CD14-positive monocyte (primary cell): ENCODE measurements at regions of chr4 and their contacts with region 1.

Region 1: GRCh38 chr4:16026160-16026761 is 57.6 kb downstream of the PROM1 start:
- DNase-seq: peak; percentile 38 to 66 (median 51)
- H3K4me3 ChIP-seq: no peak overlapping the region
- H3K4me3 Mint-ChIP-seq: no peak overlapping the region
- H3K27ac ChIP-seq: no peak overlapping the region
- H3K27ac Mint-ChIP-seq: no peak overlapping the region
- H3K4me1 ChIP-seq: peaks cover 0 to 4% of the 10 kb centered on the region in 2 donors
- H3K4me1 Mint-ChIP-seq: peaks cover 10% of the 10 kb centered on the region
- H3K27me3 ChIP-seq: no peaks in the 10 kb centered on the region
- H3K27me3 Mint-ChIP-seq: no peaks in the 10 kb centered on the region
- CTCF ChIP-seq: peak; percentile 84

Region 2: DNA sequence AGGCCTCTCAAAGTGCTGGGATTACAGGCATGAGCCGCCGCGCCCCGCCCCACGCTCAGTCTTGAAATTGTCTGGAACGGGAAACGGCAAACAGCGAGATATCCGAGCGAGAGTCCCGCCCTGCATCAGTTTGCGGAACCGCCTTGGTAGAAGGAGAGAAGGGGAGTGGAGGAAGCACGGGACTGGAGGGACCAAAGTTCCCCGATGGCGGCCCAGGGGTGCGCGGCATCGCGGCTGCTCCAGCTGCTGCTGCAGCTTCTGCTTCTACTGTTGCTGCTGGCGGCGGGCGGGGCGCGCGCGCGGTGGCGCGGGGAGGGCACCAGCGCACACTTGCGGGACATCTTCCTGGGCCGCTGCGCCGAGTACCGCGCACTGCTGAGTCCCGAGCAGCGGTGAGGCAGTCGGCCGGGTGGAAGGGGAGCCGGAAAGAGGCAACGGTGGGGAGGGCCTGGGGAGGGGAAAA is 323.3 kb before region 1 on chr4 and contains the start of gene BST1:
- intact Hi-C with region 1: no loop called
- DNase-seq: peak; percentile 93 to 96 (median 94)
- H3K4me3 ChIP-seq: peak within 1 kb of the TSS; percentile 60 to 92 (median 63)
- H3K4me3 Mint-ChIP-seq: peak within 1 kb of the TSS; percentile 87 to 97
- H3K27ac ChIP-seq: peak within 1 kb of the TSS; percentile 70 to 87
- H3K27ac Mint-ChIP-seq: peak within 1 kb of the TSS; percentile 91 to 97 (median 94)
- H3K4me1 ChIP-seq: peaks cover 68 to 81% of the 10 kb centered on the region in 2 donors
- H3K4me1 Mint-ChIP-seq: peaks cover 88% of the 10 kb centered on the region
- H3K27me3 ChIP-seq: no peaks in the 10 kb centered on the region
- H3K27me3 Mint-ChIP-seq: peaks cover 0 to 1% (median 1%) of the 10 kb centered on the region in 3 donors
- CTCF ChIP-seq: no peak
- polyA plus RNA-seq, gene BST1: 140 to 297 (median 266) TPM

Region 3: GRCh38 chr4:16443504-16444088 is 417.3 kb after region 1 on chr4:
- intact Hi-C with region 1: loop called (anchors 10 kb)
- DNase-seq: peak in 2 of 3 donors; percentile 27 to 34
- H3K4me3 ChIP-seq: no peak overlapping the region
- H3K4me3 Mint-ChIP-seq: no peak overlapping the region
- H3K27ac ChIP-seq: no peak overlapping the region
- H3K27ac Mint-ChIP-seq: no peak overlapping the region
- H3K4me1 ChIP-seq: no peaks in the 10 kb centered on the region
- H3K4me1 Mint-ChIP-seq: no peaks in the 10 kb centered on the region
- H3K27me3 ChIP-seq: no peaks in the 10 kb centered on the region
- H3K27me3 Mint-ChIP-seq: peaks cover 3 to 4% (median 4%) of the 10 kb centered on the region in 3 donors
- CTCF ChIP-seq: peak; percentile 73